ENCODE measurements at regions of chr17 and their contacts with region 1.

Region 1: GRCh38 chr17:38469875-38470274 is 41.6 kb downstream of the ARHGAP23 start:
- DNase-seq: no peak
- ATAC-seq: no peak
- H3K4me3 ChIP-seq: no peak overlapping the region
- H3K27ac ChIP-seq: no peak overlapping the region
- H3K4me1 ChIP-seq: no peaks in the 10 kb centered on the region
- H3K27me3 ChIP-seq: peaks cover 27 to 66% of the 10 kb centered on the region in 2 experiments; a peak in 4 of 5 replicates
- CTCF ChIP-seq: no peak
- EP300 ChIP-seq: no peak
- POLR2A ChIP-seq: no peak
- RAD21 ChIP-seq: no peak

Region 2: GRCh38 chr17:38421171-38421841 is 48.6 kb before region 1 on chr17:
- CTCF ChIA-PET with region 1: no interaction called
- POLR2A ChIA-PET with region 1: no interaction called
- in situ Hi-C with region 1: loop called (anchors 5 kb)
- intact Hi-C with region 1: loop called (anchors 5 kb)
- DNase-seq: no peak
- ATAC-seq: no peak
- H3K4me3 ChIP-seq: no peak overlapping the region
- H3K27ac ChIP-seq: no peak overlapping the region
- H3K4me1 ChIP-seq: peaks cover 19% of the 10 kb centered on the region
- H3K27me3 ChIP-seq: peaks cover 24 to 85% of the 10 kb centered on the region in 2 experiments
- CTCF ChIP-seq: no peak
- EP300 ChIP-seq: no peak
- POLR2A ChIP-seq: no peak
- RAD21 ChIP-seq: no peak